Activated CD4-positive, alpha-beta memory T cell treated with anti-CD3 and anti-CD28 coated beads for 36 hours (primary cell): ENCODE measurements at regions of chr1 and their contacts with region 1.

Region 1: DNA sequence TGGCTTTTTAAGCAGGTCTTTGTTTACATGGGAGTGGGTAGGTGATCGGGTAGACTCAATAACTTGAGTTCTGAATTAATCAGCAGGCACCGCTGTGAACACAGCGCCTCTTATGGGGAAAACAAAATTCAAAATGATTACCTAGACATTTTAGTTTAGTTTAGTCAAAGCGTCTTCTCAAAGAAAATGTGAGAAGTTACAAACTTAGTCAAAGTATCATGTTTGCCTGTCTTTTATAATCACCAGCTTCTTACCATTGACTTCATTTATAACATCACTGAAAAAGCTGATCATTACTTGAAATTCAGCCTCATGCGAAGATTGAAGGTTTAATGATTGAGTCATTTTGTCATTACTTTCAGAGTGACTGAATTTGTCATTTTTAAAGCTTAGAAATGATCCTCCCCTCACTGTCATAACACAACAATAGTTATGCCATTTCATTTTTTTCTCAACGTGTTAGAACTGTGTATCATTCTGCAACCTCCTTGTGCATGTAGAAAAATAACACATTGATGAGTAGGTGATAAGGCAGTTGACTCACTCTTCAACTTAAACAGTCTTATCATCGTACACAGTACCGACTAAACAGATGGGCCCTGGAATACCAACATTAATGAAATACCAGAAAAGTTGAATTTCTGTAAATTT is 188.5 kb downstream of the NFIA start:
- DNase-seq: peak; percentile 58
- H3K4me3 Mint-ChIP-seq: peak overlapping the region; percentile 26
- H3K27ac Mint-ChIP-seq: peak overlapping the region; percentile 86
- H3K4me1 Mint-ChIP-seq: peaks cover 53% of the 10 kb centered on the region
- H3K27me3 Mint-ChIP-seq: peaks cover 5% of the 10 kb centered on the region

Region 2: GRCh38 chr1:61332196-61332753 is 61.4 kb after region 1 on chr1:
- CTCF ChIA-PET with region 1: interaction called, 15 read pairs
- POLR2A ChIA-PET with region 1: interaction called, 33 read pairs
- intact Hi-C with region 1: loop called (anchors 1 kb)
- DNase-seq: peak; percentile 30
- H3K4me3 Mint-ChIP-seq: no peak overlapping the region
- H3K27ac Mint-ChIP-seq: peak overlapping the region; percentile 67
- H3K4me1 Mint-ChIP-seq: peaks cover 24% of the 10 kb centered on the region
- H3K27me3 Mint-ChIP-seq: peaks cover 2% of the 10 kb centered on the region

Region 3: GRCh38 chr1:61645476-61645875 is 374.6 kb after region 1 on chr1:
- CTCF ChIA-PET with region 1: no interaction called
- POLR2A ChIA-PET with region 1: no interaction called
- intact Hi-C with region 1: no loop called
- DNase-seq: no peak
- H3K4me3 Mint-ChIP-seq: no peak overlapping the region
- H3K27ac Mint-ChIP-seq: no peak overlapping the region
- H3K4me1 Mint-ChIP-seq: peaks cover 9% of the 10 kb centered on the region
- H3K27me3 Mint-ChIP-seq: no peaks in the 10 kb centered on the region